Panc1 (cell line): ENCODE measurements at regions of chr7 and their contacts with region 1.

Region 1: DNA sequence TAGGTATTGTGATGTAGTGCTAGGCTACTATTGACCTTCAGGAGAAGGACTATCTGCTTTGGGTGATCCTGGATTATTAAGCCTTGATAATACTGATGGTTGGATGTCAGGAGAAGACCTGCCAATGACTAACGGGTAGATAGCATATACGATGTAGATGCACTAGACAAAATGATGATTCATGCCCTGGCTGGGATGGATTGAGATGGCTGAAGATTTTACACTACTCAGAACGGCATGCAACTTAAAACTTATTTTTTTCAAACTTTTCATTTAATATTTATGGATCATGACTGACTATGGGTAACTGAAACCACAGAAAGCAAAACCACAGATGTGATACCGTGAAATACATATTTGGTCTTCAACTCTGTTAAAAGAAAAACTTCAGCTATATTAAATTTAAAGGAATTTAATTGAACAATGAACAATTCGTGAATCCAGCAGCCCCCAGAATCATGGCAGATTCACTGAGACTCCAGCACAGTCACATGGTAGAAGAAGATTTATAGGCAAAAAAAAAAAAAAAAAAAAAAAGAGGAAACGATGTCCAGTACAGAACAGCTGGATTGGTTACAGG is 124.6 kb upstream of the CDK13 start:
- DNase-seq: no peak
- ATAC-seq: no peak
- H3K4me3 ChIP-seq: no peak overlapping the region
- H3K27ac ChIP-seq: no peak overlapping the region
- H3K4me1 ChIP-seq: no peaks in the 10 kb centered on the region
- H3K27me3 ChIP-seq: peaks cover 51% of the 10 kb centered on the region
- CTCF ChIP-seq: no peak

Region 2: DNA sequence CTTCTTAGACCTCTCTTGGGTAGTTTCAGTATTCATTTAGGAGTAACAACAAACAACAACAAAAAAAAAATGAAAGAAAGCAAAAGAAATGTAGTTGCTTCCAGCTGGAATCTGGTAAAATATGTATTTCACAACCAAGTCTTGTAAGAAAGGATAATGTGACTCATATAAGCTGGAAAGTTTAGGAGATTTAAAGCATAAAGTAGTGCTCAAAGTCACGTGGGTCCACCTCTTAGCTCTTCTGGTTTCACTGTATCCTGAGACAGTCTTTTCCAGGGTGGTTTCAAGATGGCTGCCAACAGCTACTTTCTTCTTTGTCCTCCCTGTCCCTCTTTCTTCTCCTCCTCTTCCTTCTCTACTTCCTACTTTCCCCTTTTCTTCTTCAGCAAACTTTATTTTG is 55.1 kb after region 1 on chr7:
- CTCF ChIA-PET with region 1: no interaction called
- POLR2A ChIA-PET with region 1: interaction called, 20 read pairs
- in situ Hi-C with region 1: no loop called
- intact Hi-C with region 1: no loop called
- DNase-seq: no peak
- ATAC-seq: no peak
- H3K4me3 ChIP-seq: no peak overlapping the region
- H3K27ac ChIP-seq: no peak overlapping the region
- H3K4me1 ChIP-seq: no peaks in the 10 kb centered on the region
- H3K27me3 ChIP-seq: no peaks in the 10 kb centered on the region
- CTCF ChIP-seq: no peak

Region 3: GRCh38 chr7:40093631-40094350 is 268.3 kb after region 1 on chr7:
- CTCF ChIA-PET with region 1: no interaction called
- POLR2A ChIA-PET with region 1: no interaction called
- in situ Hi-C with region 1: no loop called
- intact Hi-C with region 1: no loop called
- DNase-seq: no peak
- ATAC-seq: no peak
- H3K4me3 ChIP-seq: no peak overlapping the region
- H3K27ac ChIP-seq: no peak overlapping the region
- H3K4me1 ChIP-seq: peaks cover 6% of the 10 kb centered on the region; the same call in 1 of the 2 replicates
- H3K27me3 ChIP-seq: no peaks in the 10 kb centered on the region
- CTCF ChIP-seq: no peak

Region 4: GRCh38 chr7:40120020-40120419 is 294.5 kb after region 1 on chr7:
- CTCF ChIA-PET with region 1: no interaction called
- POLR2A ChIA-PET with region 1: no interaction called
- in situ Hi-C with region 1: no loop called
- intact Hi-C with region 1: no loop called
- DNase-seq: no peak
- ATAC-seq: no peak
- H3K4me3 ChIP-seq: no peak overlapping the region
- H3K27ac ChIP-seq: no peak overlapping the region
- H3K4me1 ChIP-seq: no peaks in the 10 kb centered on the region
- H3K27me3 ChIP-seq: no peaks in the 10 kb centered on the region
- CTCF ChIP-seq: no peak